Gastrocnemius medialis (tissue), 4 donors: ENCODE measurements at regions of chr14 and their contacts with region 1.

Region 1: GRCh38 chr14:70027785-70028428 is 148.7 kb downstream of the SMOC1 start:
- DNase-seq: peak; percentile 44 to 51
- ATAC-seq: peak; percentile 45 to 80
- H3K4me3 ChIP-seq: no peak overlapping the region
- H3K27ac ChIP-seq: no peak overlapping the region
- H3K4me1 ChIP-seq: no peaks in the 10 kb centered on the region
- H3K27me3 ChIP-seq: no peaks in the 10 kb centered on the region
- CTCF ChIP-seq: peak; percentile 86 to 92 (median 90)
- POLR2A ChIP-seq: no peak

Region 2: GRCh38 chr14:69812714-69813113 is 215.2 kb before region 1 on chr14:
- in situ Hi-C with region 1: loop called (anchors 5 kb)
- intact Hi-C with region 1: no loop called
- DNase-seq: no peak
- ATAC-seq: no peak
- H3K4me3 ChIP-seq: no peak overlapping the region
- H3K27ac ChIP-seq: no peak overlapping the region
- H3K4me1 ChIP-seq: no peaks in the 10 kb centered on the region
- H3K27me3 ChIP-seq: no peaks in the 10 kb centered on the region
- CTCF ChIP-seq: no peak
- POLR2A ChIP-seq: no peak

Region 3: DNA sequence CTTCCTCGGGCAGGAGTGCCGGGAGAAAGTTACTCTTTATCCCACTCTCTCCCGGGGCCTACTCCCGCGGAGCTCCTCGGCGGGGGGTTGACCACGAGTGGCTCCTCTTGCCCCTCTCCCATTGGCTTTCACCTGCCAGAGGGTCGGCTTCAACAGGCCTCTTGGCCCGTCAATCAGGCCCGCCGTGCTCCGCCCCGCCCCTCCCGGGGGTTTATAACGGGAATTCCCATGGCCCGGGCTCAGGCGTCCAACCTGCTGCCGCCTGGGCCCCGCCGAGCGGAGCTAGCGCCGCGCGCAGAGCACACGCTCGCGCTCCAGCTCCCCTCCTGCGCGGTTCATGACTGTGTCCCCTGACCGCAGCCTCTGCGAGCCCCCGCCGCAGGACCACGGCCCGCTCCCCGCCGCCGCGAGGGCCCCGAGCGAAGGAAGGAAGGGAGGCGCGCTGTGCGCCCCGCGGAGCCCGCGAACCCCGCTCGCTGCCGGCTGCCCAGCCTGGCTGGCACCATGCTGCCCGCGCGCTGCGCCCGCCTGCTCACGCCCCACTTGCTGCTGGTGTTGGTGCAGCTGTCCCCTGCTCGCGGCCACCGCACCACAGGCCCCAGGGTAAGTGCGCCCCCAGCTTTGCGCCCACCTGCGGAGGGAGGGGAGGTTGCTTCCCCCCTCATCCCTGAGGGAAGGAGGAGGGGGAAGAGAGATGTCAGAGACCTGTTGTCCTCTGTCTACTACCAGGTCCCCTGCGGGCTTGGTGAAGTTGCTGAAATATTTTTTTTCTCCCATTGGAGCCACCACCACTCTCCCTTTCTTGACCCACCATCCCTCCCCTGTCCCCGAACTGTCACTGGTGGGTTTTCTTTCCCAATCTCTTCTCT is 148.5 kb before region 1 on chr14 and contains the start of gene SMOC1:
- in situ Hi-C with region 1: no loop called
- intact Hi-C with region 1: loop called (anchors 2 kb)
- DNase-seq: peak; percentile 53 to 79
- ATAC-seq: peak; percentile 51 to 70
- H3K4me3 ChIP-seq: peak within 1 kb of the TSS; percentile 51 to 69 (median 60)
- H3K27ac ChIP-seq: peak within 1 kb of the TSS; percentile 64 to 83 (median 76)
- H3K4me1 ChIP-seq: peaks cover 6 to 14% of the 10 kb centered on the region in 2 donors
- H3K27me3 ChIP-seq: no peaks in the 10 kb centered on the region
- CTCF ChIP-seq: no peak
- POLR2A ChIP-seq: peak; percentile 70 to 88
- total RNA-seq, gene SMOC1: 2.7 to 10.2 (median 7.8) TPM

Region 4: DNA sequence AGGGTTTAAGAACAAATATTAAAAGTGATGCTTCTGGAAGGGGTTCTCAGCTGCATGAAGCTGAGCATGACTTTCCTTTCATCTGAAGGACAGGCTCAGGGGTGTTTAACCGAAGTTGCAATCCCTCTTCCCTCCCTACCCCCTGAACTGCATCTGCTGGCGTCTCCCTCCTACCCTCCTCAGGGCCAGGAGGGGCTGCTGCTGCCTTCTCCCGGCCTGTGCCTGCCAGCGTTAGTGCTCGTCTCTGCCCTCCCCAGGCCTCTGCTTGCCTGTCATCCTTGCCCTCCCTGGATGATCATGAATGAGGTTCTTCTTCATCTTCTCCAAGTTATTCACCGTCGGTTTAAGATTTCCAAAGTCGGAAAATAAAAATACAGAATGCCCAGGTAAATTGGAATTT is 136.5 kb before region 1 on chr14:
- in situ Hi-C with region 1: no loop called
- intact Hi-C with region 1: no loop called
- DNase-seq: no peak
- ATAC-seq: no peak
- H3K4me3 ChIP-seq: no peak overlapping the region
- H3K27ac ChIP-seq: no peak overlapping the region
- H3K4me1 ChIP-seq: peaks cover 0 to 8% of the 10 kb centered on the region in 2 donors
- H3K27me3 ChIP-seq: no peaks in the 10 kb centered on the region
- CTCF ChIP-seq: no peak
- POLR2A ChIP-seq: no peak

Region 5: GRCh38 chr14:70254476-70254961 is 226.6 kb after region 1 on chr14:
- in situ Hi-C with region 1: loop called in 1 of 4 experiments (anchors 25 kb)
- intact Hi-C with region 1: no loop called
- DNase-seq: peak in 1 of 2 donors; percentile 37
- ATAC-seq: peak in 1 of 2 donors; percentile 64
- H3K4me3 ChIP-seq: peak overlapping the region; percentile 49 to 71 (median 52)
- H3K27ac ChIP-seq: no peak overlapping the region
- H3K4me1 ChIP-seq: no peaks in the 10 kb centered on the region
- H3K27me3 ChIP-seq: peaks cover 0 to 3% (median 0%) of the 10 kb centered on the region in 3 donors
- CTCF ChIP-seq: no peak
- POLR2A ChIP-seq: no peak